ENCODE measurements at regions of chr1 and their contacts with region 1.

Region 1: DNA sequence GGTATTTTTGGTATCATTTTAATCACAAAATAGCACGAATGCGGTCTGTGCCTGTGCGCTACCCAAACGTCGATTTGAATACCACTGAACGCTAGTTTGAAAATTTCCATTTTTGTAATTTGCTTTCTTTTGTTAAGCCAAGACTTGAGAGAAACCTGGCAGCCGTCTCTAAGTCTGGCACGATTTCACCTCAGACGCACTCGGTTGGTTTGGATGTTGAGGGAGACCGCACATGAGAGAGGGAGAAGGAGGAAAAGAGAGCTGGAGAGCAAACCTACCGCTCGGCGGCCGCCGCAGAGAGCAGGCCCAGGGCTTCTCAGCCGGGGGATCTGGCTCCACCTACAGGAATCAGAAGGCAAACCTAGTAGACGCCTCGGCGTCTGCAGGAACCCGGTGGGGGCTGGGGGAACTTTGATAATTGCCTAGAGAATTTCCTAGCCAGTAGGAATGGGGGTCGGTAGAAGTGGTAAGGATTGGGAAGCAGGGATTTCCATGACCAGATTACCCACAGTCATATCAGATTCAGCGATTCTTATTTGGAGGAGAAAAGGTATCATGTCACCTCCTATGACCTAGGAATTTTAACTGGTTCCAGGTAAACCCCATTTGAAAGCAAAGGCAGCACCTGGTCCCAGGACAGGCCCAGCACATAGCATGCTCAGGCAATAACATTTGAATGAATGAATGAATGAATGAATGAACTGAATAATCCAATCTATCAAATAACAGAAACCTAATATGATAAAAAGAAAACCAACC is 83.2 kb downstream of the TM2D1 start:
- DNase-seq: peak; percentile 32 to 54
- ATAC-seq: peak; percentile 81 to 99 (median 88)
- H3K4me3 ChIP-seq: peak overlapping the region; percentile 7
- H3K4me3 Mint-ChIP-seq: peak overlapping the region; percentile 70
- H3K27ac ChIP-seq: no peak overlapping the region
- H3K27ac Mint-ChIP-seq: peak overlapping the region in 1 of 2 donors; percentile 14
- H3K4me1 ChIP-seq: peaks cover 4% of the 10 kb centered on the region
- H3K4me1 Mint-ChIP-seq: peaks cover 11 to 12% of the 10 kb centered on the region in 2 donors
- H3K27me3 ChIP-seq: no peaks in the 10 kb centered on the region
- H3K27me3 Mint-ChIP-seq: peaks cover 11 to 13% of the 10 kb centered on the region in 2 donors
- CTCF ChIP-seq: peak; percentile 70

Region 2: DNA sequence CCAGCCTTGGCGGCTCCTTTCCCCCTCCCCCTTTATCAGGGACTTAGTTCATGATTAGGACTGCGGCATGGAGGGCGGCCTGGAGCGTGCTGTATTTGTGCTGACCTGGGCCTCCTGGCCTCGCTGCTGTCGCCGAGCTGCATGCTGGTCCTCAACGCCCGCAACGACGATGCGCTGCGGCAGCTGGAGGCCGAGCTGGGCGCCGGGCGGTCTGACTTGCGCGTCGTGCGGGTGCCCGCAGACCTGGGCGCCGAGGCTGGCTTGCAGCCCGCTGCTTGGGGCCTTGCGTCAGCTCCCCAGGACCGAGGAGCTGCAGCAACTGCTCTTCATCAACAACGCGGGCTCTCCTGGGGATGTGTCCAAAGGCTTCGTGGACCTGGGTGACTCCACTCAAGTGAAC is 12.3 kb after region 1 on chr1:
- intact Hi-C with region 1: loop called (anchors 1 kb)
- DNase-seq: no peak
- ATAC-seq: no peak
- H3K4me3 ChIP-seq: no peak overlapping the region
- H3K4me3 Mint-ChIP-seq: no peak overlapping the region
- H3K27ac ChIP-seq: no peak overlapping the region
- H3K27ac Mint-ChIP-seq: no peak overlapping the region
- H3K4me1 ChIP-seq: no peaks in the 10 kb centered on the region
- H3K4me1 Mint-ChIP-seq: no peaks in the 10 kb centered on the region
- H3K27me3 ChIP-seq: no peaks in the 10 kb centered on the region
- H3K27me3 Mint-ChIP-seq: peaks cover 5 to 6% of the 10 kb centered on the region in 2 donors
- CTCF ChIP-seq: no peak

Region 3: DNA sequence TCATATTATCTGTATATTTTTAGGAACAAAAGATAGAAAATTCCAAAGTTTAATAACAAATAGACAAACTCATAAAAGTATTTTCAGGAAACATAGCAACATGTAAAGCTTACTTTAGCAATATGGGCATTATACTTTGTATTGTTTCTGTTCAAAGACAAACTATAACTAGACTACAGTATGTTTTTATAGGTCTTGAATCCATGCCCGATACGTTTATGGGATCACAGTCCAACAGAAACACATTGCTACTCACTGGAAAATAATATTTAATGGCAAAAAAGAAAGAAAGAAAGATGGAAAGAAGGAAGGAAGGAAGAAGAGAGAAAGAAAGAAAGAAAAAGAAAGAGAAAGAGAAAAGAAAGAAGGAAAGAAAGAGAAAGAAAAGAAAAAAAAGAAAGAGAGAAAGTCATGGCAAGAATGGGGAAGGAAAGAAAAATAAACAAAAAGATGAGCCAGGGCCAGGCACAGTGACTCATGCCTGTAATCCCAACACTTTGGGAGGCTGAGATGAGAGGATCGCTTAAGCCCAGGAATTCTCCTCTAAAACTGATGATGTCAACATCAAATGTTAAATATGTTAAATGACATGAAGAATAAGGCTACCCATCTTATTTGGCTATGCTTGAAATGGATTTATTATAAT is 50.5 kb after region 1 on chr1:
- intact Hi-C with region 1: no loop called
- DNase-seq: no peak
- ATAC-seq: no peak
- H3K4me3 ChIP-seq: no peak overlapping the region
- H3K4me3 Mint-ChIP-seq: no peak overlapping the region
- H3K27ac ChIP-seq: no peak overlapping the region
- H3K27ac Mint-ChIP-seq: no peak overlapping the region
- H3K4me1 ChIP-seq: no peaks in the 10 kb centered on the region
- H3K4me1 Mint-ChIP-seq: no peaks in the 10 kb centered on the region
- H3K27me3 ChIP-seq: no peaks in the 10 kb centered on the region
- H3K27me3 Mint-ChIP-seq: no peaks in the 10 kb centered on the region
- CTCF ChIP-seq: no peak

Measured in natural killer cell (primary cell).